ENCODE measurements at regions of chr19 and their contacts with region 1.

Region 1: DNA sequence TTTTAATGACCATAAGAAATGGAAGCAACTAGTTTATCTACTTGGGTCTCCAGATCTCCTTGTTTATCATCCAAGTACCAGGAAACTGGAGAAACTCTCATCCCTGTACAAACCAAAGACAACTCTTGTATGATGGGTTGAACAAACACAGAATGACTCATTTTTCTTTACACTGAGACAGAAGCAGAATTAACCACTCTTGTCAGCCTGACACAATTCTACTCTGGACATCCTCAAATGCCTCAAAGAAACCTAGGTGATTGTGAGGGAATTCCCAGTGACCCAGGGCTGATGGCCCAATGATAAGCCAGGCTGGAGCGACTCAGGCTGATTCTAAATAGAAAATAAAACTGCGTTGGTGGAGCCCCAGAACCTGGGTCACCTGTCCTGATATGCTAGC is 151.5 kb downstream of the ZNF737 start:
- DNase-seq: no peak
- H3K4me3 ChIP-seq: no peak overlapping the region
- H3K27ac ChIP-seq: no peak overlapping the region
- H3K27me3 ChIP-seq: no peaks in the 10 kb centered on the region
- CTCF ChIP-seq: no peak

Region 2: DNA sequence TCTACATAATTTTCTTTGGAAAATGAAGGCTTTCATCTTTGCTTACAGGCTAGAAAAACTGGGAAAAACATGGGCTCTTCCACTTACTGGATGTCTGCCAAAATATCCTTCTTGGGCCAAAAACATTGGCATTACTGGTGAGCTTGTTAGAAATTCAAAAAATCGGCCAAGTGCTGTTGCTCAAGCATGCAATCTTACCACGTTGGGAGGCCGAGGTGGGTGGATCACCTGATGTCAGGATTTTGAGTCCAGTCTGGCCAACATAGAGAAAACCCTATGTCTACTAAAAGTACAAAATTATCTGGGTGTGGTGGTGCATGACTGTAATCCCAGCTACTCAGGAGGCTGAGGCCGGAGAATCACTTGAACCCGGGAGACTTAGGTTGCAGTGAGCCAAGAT is 25.3 kb before region 1 on chr19:
- CTCF ChIA-PET with region 1: no interaction called
- POLR2A ChIA-PET with region 1: interaction called, 10 read pairs
- DNase-seq: no peak
- H3K4me3 ChIP-seq: no peak overlapping the region
- H3K27ac ChIP-seq: no peak overlapping the region
- H3K27me3 ChIP-seq: no peaks in the 10 kb centered on the region
- CTCF ChIP-seq: no peak